PC-9 (cell line): ENCODE measurements at regions of chr4 and their contacts with region 1.

Region 1: DNA sequence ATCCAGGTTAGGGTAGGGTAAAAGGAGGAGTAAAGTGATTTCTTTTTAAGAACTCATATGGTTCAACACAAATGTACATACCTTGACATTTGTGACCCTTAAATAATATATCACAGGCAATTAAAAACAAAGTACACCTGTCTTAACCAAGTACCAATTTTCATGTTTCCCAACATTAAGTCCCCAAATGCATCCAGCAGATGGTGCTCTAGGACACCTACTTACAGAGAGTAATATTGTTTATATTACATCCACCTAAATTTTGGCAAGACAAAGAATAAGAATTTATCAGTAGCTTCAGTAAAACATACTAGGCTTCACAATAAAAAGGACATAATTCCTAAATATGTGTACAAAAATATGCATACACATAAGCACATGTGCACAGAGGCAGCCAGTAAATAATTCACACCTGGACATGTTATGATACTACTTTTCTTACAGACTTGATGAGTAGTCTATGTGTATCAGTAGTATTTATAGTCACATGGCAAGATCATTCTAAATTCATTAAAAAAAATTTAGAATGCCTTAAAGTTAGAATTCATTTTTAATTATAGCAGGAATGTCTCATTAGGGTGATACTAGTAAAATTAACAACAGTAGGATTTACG is 219.7 kb downstream of the DCLK2 start:
- DNase-seq: peak in 1 of 2 experiments; percentile 20
- H3K4me3 ChIP-seq: no peak overlapping the region
- H3K27ac ChIP-seq: no peak overlapping the region
- H3K4me1 ChIP-seq: no peaks in the 10 kb centered on the region
- H3K27me3 ChIP-seq: no peaks in the 10 kb centered on the region
- CTCF ChIP-seq: peak; percentile 66

Region 2: GRCh38 chr4:150593996-150594395 is 296.0 kb after region 1 on chr4:
- CTCF ChIA-PET with region 1: no interaction called
- POLR2A ChIA-PET with region 1: no interaction called
- intact Hi-C with region 1: loop called (anchors 5 kb)
- DNase-seq: no peak
- H3K4me3 ChIP-seq: no peak overlapping the region
- H3K27ac ChIP-seq: no peak overlapping the region
- H3K4me1 ChIP-seq: no peaks in the 10 kb centered on the region
- H3K27me3 ChIP-seq: no peaks in the 10 kb centered on the region
- CTCF ChIP-seq: no peak; the same call in 1 of the 2 replicates

Region 3: DNA sequence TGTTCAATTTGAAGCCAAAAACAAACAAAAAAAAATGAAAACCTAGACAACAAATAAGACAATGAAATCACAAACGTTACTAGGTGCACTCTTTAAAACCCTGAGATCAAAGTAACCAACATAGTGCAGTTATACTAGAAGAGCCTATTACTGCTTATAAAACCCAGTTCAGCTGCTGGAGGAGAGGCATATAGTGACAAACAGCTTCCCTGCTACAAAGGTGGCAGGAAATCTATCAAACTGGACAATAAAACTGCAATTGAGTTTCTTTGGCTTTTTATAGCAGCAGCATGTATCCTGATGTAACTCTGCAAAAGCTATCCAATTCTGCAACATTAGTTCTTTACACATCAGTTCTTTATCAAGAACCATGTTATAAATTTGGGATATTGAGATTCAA is 561.5 kb after region 1 on chr4:
- CTCF ChIA-PET with region 1: no interaction called
- POLR2A ChIA-PET with region 1: no interaction called
- intact Hi-C with region 1: loop called (anchors 2 kb)
- DNase-seq: no peak
- H3K4me3 ChIP-seq: no peak overlapping the region
- H3K27ac ChIP-seq: no peak overlapping the region
- H3K4me1 ChIP-seq: no peaks in the 10 kb centered on the region
- H3K27me3 ChIP-seq: no peaks in the 10 kb centered on the region
- CTCF ChIP-seq: no peak